ENCODE measurements at regions of chr5 and their contacts with region 1.

Region 1: GRCh38 chr5:140329739-140330481 is 16.5 kb downstream of the HBEGF start:
- DNase-seq: no peak

Region 2: DNA sequence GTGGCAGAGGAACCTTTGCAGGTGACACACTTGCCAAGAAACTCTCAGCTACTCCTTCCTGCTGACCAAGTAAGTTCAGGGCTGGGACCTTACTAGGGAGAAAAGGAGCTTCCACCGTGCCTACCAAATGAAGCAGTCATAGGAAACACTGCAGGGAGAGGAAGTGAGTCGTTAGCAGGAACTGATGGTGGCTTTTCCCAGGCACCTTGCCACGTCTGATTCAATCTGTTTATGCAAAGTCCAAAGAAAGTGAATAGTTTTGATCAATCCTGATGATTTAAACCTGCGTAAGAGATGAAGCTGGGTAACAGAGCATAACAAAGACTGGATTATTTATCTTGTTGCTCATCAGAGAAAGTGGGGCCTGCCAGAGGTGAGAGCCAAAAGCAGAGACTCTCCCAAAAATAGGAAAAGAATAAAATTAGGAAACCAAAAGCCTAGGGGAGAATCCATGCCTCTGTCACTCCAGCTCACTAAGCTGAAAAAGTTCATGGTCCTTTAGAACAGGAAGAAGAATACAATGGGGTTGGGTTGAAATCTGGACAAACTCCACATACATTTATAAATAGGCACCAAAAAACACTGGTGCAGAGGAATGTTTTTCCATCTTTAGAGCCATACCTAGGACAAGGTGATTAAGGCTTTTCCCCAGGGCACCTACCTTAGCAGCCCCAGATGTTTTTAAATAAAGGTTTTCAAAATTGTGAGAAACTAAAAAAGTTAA is 17.7 kb before region 1 on chr5:
- intact Hi-C with region 1: loop called in 1 of 2 experiments (anchors 2 kb)
- DNase-seq: no peak